ENCODE measurements at regions of chr16 and their contacts with region 1.

Region 1: GRCh38 chr16:8806272-8806983 is 8.8 kb downstream of the PMM2 start:
- DNase-seq: no peak
- ATAC-seq: no peak
- H3K4me3 ChIP-seq: no peak overlapping the region
- H3K27ac ChIP-seq: no peak overlapping the region
- H3K4me1 ChIP-seq: peaks cover 0 to 22% (median 6%) of the 10 kb centered on the region in 4 donors
- H3K27me3 ChIP-seq: no peaks in the 10 kb centered on the region
- CTCF ChIP-seq: no peak
- POLR2A ChIP-seq: no peak

Region 2: DNA sequence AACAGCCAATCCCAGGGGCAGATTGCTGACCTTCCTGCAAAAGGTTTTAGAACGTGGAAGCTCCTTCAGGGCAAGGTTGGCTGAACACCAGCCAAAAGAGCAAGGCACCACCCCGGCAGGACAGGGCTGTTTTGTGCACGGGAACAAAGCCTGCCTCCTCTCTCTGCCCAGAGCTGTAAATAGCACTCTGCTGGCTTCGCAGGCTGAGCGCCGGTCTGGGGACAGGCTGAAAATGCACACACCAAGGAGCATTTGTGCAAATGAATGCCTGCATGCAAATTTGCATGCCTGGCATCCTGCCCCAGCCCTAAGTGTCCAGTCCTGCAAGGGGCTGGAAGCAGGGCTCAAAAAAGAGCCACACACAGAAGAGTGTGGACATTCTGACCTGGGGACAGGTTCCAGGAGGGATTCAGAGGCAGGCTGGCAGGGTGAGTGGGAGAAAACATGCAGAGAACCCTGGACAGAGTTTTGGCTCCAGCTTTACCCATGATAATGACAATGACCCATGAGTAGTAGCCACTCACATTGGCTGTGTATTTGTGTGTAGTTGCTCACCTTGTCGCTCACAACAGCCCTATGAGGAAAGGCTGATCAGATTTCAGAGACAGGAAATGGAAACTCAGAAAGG is 120.3 kb before region 1 on chr16:
- intact Hi-C with region 1: no loop called
- DNase-seq: peak; percentile 42 to 80 (median 80)
- ATAC-seq: peak; percentile 63 to 89 (median 76)
- H3K4me3 ChIP-seq: no peak overlapping the region
- H3K27ac ChIP-seq: peak overlapping the region in 2 of 3 donors; percentile 52 to 54
- H3K4me1 ChIP-seq: peaks cover 0 to 32% (median 12%) of the 10 kb centered on the region in 4 donors
- H3K27me3 ChIP-seq: no peaks in the 10 kb centered on the region
- CTCF ChIP-seq: no peak
- POLR2A ChIP-seq: no peak

Region 3: DNA sequence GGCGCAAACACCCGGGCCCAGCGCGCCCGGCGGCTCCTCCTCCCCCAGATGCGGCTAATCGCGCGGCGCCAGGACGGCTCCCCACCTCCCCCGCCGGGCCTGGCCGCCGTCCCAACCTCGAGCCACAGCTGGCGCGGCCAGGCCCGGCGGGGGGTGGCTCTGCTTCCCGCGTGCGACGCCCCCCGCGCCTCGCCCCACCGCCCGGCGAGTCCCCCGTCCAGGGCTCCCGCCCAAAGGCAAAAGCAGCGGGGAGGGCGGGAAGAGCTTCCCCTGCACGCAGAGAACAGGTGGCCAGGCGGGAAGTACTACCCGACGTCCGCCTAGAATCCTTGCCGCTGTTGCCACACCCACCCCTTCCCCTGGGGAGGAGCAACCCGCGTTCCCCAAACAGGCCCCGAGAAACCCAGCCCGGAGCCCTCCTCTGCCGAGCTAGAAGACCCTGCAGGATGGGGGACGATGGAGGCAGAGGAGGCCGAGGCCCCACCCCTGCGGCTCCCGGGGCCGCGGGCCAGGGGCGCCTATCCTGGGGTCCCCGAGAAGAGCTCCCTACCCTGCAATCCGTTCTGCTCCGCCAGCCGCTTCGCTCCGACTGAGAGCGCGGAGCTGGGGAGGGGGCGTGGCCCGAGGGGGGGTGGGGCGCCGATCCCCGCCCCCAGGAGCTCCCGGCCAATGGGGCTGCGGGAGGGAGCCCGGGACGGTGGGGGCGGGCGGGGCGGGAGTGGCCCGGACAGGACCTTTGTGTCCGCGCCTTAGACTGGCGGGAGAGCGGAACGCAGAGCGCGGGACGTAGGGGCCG is 62.2 kb after region 1 on chr16 and contains the start of gene CARHSP1:
- intact Hi-C with region 1: loop called in 1 of 2 experiments (anchors 10 kb)
- DNase-seq: peak; percentile 91 to 95 (median 91)
- ATAC-seq: peak; percentile 69 to 87 (median 74)
- H3K4me3 ChIP-seq: peak within 1 kb of the TSS; percentile 88 to 99 (median 92)
- H3K27ac ChIP-seq: peak within 1 kb of the TSS; percentile 78 to 89 (median 89)
- H3K4me1 ChIP-seq: peaks cover 0 to 47% (median 22%) of the 10 kb centered on the region in 4 donors
- H3K27me3 ChIP-seq: no peaks in the 10 kb centered on the region
- CTCF ChIP-seq: no peak
- POLR2A ChIP-seq: peak; percentile 61
- total RNA-seq, gene CARHSP1: 61.5 to 132 (median 73.1) TPM